Activated T-helper 1 cell treated with anti-CD3 and anti-CD28 coated beads, Interleukin-12 subunit alpha, Interleukin-12 subunit beta, Interleukin-2, Interleukin-4 antibody, amounts not matched to agents 30 ng/mL and 10 ng/mL and 1 ng/mL, durations not matched to agents 14 hours and 24 hours and 36 hours (primary cell): ENCODE measurements at regions of chr5 and their contacts with region 1.

Region 1: DNA sequence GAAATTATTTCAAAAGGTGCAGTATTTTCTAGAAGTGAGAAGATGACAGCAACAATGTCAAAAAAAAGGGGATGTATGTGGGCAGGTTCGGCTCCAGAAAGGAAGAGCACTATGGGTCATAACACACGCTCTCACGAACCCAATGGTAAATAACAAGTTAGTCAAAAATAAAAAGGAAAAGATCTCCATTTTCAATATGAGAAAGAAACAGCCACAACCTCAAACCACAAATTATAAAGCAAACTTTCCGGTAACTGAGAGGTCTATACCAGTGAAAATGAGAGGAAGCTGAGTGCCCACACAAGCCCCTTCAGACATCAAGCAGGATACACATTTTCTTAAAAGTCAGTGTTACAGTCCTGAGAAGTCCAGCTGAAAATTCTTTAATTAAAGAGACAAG is 398.5 kb upstream of the RPS23 start:
- DNase-seq: peak; percentile 27
- H3K4me3 Mint-ChIP-seq: peak overlapping the region; percentile 63
- H3K27ac Mint-ChIP-seq: peak overlapping the region; percentile 94
- H3K4me1 Mint-ChIP-seq: peaks cover 44% of the 10 kb centered on the region
- H3K27me3 Mint-ChIP-seq: no peaks in the 10 kb centered on the region

Region 2: GRCh38 chr5:82364497-82364896 is 312.2 kb before region 1 on chr5:
- intact Hi-C with region 1: loop called (anchors 2 kb)
- DNase-seq: no peak
- H3K4me3 Mint-ChIP-seq: no peak overlapping the region
- H3K27ac Mint-ChIP-seq: no peak overlapping the region
- H3K4me1 Mint-ChIP-seq: peaks cover 68% of the 10 kb centered on the region
- H3K27me3 Mint-ChIP-seq: no peaks in the 10 kb centered on the region

Region 3: GRCh38 chr5:82526540-82526939 is 150.1 kb before region 1 on chr5:
- intact Hi-C with region 1: loop called (anchors 5 kb)
- DNase-seq: no peak
- H3K4me3 Mint-ChIP-seq: no peak overlapping the region
- H3K27ac Mint-ChIP-seq: no peak overlapping the region
- H3K4me1 Mint-ChIP-seq: peaks cover 17% of the 10 kb centered on the region
- H3K27me3 Mint-ChIP-seq: no peaks in the 10 kb centered on the region

Region 4: DNA sequence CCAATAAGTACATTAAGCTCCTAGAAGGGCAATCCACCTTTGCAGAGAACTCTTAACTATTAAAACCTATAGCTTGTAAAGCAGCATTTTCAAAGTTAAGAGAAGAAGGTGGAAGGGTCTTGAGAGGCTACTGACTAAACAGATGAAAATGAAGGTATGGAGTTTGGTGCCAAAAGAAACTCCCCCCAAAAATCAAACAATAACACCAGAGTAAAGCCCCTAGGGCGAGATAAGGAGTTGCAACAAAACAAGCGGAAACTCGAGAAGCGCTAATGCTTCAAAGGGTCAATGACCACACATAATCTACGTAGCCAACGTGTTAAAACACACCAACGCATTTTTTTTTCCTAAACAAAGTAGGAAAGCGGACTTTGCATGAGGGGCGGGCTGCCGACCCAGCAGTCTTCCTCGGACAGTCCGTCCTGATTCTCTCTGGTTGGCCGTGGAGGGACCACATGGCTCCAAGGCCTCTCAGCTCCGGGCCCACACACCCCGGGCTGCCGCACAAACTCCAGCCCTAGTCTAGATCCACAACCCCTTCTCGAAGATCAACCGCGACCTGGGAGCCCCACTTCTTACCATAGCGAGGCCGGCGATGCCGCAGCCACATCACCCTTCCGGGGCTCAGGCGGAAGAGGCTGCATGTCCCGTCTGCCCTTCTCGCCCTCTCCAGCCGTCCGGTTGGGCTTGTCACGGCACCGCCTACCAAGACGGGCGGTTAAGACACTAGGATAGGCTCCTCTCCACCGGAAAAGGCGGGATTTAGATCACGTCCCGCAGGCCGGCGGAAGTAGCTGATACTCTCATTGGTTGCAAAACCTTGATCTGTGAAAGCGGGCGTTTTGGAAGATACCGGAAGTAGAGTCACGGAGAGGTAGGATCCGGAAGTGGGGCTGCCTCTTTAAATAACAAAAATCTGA is 400.3 kb after region 1 on chr5 and contains the starts of genes TMEM167A and XRCC4:
- intact Hi-C with region 1: loop called (anchors 1 kb)
- DNase-seq: peak; percentile 93
- H3K4me3 Mint-ChIP-seq: peak within 1 kb of the TSS; percentile 100
- H3K27ac Mint-ChIP-seq: peak within 1 kb of the TSS; percentile 99
- H3K4me1 Mint-ChIP-seq: peaks cover 43% of the 10 kb centered on the region
- H3K27me3 Mint-ChIP-seq: no peaks in the 10 kb centered on the region
- total RNA-seq, gene TMEM167A: 84.6 and 96.2 TPM in 2 replicates
- total RNA-seq, gene XRCC4: 10.2 and 11.2 TPM in 2 replicates